Posterior vena cava (tissue), 2 donors: ENCODE measurements at regions of chr18 and their contacts with region 1.

Region 1: DNA sequence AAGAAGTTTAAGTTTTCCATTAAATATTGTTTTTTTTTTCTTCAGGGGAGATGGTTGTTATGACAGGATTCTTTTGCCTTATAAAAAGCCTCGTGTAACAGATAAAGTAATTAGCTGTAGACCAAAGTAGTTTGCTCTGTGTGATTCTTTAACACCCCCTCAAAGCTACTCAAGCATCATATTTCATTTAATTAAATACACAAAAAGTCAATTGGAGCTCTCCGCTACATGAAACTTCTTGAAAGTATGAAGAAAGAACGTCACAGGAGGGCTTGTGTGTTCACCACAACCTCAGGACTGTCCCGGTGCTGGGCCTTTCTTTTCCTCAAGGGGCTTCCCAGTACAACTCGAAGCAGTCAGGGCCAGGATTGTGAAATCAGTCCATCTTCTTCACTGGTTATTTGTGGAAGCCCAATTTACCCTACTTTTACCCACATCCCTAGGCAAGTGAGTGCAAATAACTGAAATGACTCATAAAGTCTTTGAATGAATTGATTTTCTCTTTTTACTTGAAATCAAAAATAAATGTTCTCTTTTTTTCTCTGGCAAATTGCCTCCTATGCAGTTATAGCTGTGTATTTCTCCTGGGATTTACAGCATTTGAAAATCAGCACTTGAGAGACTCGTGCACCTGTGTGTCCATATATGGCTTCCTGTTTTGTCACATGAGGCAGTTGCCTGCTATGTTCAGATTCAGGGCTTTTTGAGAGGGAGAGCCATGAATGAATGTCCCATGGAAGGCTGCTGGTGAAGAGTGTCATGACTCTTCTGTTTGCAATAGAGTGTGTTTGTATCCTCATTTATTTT is 48.6 kb downstream of the LINC00305 start:
- DNase-seq: no peak

Region 2: GRCh38 chr18:63603772-63604171 is 496.5 kb before region 1 on chr18:
- intact Hi-C with region 1: loop called in 1 of 2 experiments (anchors 5 kb)
- DNase-seq: no peak

Region 3: GRCh38 chr18:64175432-64175831 is 75.1 kb after region 1 on chr18:
- intact Hi-C with region 1: loop called in 1 of 2 experiments (anchors 2 kb)
- DNase-seq: no peak

Region 4: GRCh38 chr18:64330161-64330560 is 229.8 kb after region 1 on chr18:
- intact Hi-C with region 1: no loop called
- DNase-seq: no peak

Region 5: DNA sequence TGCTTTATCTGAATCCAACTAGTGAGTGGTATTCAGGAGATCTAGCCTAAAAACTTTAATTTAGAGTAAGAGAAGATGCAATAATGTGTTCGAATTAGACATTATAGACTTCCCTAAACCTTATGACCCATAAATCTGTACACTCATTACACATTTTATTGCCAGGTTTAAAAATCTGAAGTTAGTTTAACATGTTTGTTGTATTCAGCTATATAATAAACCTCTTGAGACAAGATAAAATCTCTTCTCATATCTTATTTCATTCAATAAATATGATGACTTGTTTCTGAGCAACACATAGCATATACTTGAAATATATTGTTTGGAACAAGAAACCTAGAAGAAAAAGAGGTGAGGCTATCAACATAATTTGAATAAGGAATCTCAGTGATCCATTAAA is 1801.2 kb after region 1 on chr18:
- intact Hi-C with region 1: no loop called
- DNase-seq: no peak